Psoas muscle (tissue), 8 donors: ENCODE measurements at regions of chr13 and their contacts with region 1.

Region 1: DNA sequence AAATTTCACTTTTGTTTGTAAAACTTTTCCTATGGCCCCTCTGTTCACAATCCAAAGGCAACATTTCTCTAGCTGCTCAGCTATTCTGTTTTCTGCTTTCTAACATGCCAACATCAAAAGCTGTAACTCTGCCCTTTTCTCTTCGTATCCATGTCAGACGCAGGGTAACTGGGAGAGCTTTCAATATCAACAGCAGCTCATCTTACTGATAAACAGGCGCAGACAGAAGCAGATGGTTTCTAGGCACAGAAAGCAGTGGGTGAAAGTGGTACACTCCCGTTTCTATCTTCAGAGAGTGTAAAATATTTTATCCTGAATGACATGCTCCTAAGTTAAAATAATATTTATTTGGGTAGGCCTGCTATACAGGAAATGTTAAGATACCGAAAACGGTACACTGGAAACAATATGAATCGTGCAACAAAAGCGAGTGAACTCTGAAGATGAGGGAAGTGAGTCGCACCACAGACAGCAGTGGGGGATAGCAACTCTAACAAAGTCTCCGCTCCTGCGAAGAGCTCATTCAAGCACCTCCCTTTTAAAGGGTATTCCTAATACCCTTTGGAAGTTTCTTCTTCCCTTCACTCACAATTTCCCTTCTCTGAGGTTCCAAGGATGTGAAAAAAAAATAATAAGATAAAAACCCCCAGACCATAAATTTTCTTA is 798.3 kb downstream of the GPC5 start:
- DNase-seq: no peak
- ATAC-seq: no peak
- H3K4me3 ChIP-seq: no peak overlapping the region
- H3K27ac ChIP-seq: no peak overlapping the region
- H3K4me1 ChIP-seq: no peaks in the 10 kb centered on the region
- H3K27me3 ChIP-seq: no peaks in the 10 kb centered on the region
- CTCF ChIP-seq: no peak

Region 2: DNA sequence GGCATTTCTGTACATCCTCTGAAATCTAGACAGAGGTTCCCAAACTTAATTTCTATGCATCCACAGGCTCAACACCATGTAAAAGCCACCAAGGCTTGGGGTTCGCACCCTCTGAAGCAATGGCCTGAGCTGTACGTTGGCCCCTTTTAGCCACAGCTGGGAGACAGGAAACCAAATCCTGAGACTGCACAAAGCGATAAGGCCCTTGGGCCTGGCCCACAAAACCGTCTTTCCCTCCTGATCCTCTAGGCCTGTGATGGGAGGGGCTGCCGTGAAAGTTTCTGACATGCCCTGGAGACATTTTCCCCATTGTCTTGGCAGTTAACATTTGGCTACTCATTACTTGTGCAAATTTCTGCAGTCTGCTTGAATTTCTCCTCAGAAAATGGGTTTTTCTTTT is 31.9 kb before region 1 on chr13:
- intact Hi-C with region 1: loop called in 1 of 2 experiments (anchors 1 kb)
- DNase-seq: no peak
- ATAC-seq: no peak
- H3K4me3 ChIP-seq: no peak overlapping the region
- H3K27ac ChIP-seq: no peak overlapping the region
- H3K4me1 ChIP-seq: no peaks in the 10 kb centered on the region
- H3K27me3 ChIP-seq: no peaks in the 10 kb centered on the region
- CTCF ChIP-seq: no peak

Region 3: GRCh38 chr13:93233997-93234416 is 1037.3 kb after region 1 on chr13:
- intact Hi-C with region 1: no loop called
- DNase-seq: no peak
- ATAC-seq: no peak
- H3K4me3 ChIP-seq: no peak overlapping the region
- H3K27ac ChIP-seq: no peak overlapping the region
- H3K4me1 ChIP-seq: no peaks in the 10 kb centered on the region
- H3K27me3 ChIP-seq: peaks cover 0 to 5% (median 0%) of the 10 kb centered on the region in 3 donors
- CTCF ChIP-seq: no peak